Testis (tissue), 5 donors: ENCODE measurements at regions of chr13 and their contacts with region 1.

Region 1: DNA sequence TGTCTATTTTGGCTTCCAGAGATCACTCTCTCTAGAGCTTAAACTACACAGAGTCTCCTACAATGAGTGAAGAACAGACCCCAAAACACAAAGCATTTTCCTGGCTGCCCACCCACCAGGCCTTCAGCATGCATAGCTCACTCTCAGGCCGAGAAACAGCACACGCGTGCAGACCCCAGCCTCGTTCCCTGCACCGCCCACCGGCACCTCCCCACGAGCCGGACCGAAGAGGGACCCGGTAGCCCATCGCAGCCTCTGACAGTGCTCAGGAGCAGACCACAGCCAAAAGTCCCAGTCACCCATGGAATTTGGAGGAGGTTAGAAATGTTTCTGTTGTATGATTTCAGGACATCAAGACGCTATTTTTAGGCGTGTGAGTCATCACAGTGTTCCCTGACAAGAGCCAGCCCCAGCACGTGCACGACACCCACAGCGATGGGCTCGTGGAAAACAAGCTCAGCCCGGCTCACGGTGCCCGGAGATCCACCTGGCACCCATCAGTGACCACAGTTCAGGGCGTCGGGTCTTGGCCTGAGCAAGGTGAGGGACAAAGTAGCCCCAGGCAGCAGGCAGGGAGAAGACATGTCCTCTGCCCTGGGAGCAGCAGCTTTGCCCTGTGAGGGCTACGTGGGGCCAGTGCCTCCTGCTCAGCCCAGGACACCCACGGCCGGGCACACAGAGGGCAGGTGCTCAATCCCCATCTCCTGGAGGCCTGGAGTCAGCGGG is 50.1 kb upstream of the SPACA7 start:
- DNase-seq: no peak
- H3K4me3 ChIP-seq: no peak overlapping the region
- H3K27ac ChIP-seq: no peak overlapping the region
- H3K4me1 ChIP-seq: no peaks in the 10 kb centered on the region
- H3K27me3 ChIP-seq: no peaks in the 10 kb centered on the region
- CTCF ChIP-seq: no peak
- POLR2A ChIP-seq: no peak

Region 2: GRCh38 chr13:111539791-111540446 is 786.2 kb before region 1 on chr13:
- intact Hi-C with region 1: loop called (anchors 5 kb)
- DNase-seq: no peak
- H3K4me3 ChIP-seq: no peak overlapping the region
- H3K27ac ChIP-seq: no peak overlapping the region
- H3K4me1 ChIP-seq: no peaks in the 10 kb centered on the region
- H3K27me3 ChIP-seq: no peaks in the 10 kb centered on the region
- CTCF ChIP-seq: no peak
- POLR2A ChIP-seq: no peak

Region 3: GRCh38 chr13:112124141-112124540 is 201.9 kb before region 1 on chr13:
- intact Hi-C with region 1: no loop called
- DNase-seq: no peak
- H3K4me3 ChIP-seq: no peak overlapping the region
- H3K27ac ChIP-seq: no peak overlapping the region
- H3K4me1 ChIP-seq: no peaks in the 10 kb centered on the region
- H3K27me3 ChIP-seq: no peaks in the 10 kb centered on the region
- CTCF ChIP-seq: no peak
- POLR2A ChIP-seq: no peak

Region 4: GRCh38 chr13:112522578-112522977 is 196.5 kb after region 1 on chr13:
- intact Hi-C with region 1: no loop called
- DNase-seq: no peak
- H3K4me3 ChIP-seq: no peak overlapping the region
- H3K27ac ChIP-seq: no peak overlapping the region
- H3K4me1 ChIP-seq: no peaks in the 10 kb centered on the region
- H3K27me3 ChIP-seq: no peaks in the 10 kb centered on the region
- CTCF ChIP-seq: no peak
- POLR2A ChIP-seq: no peak

Region 5: DNA sequence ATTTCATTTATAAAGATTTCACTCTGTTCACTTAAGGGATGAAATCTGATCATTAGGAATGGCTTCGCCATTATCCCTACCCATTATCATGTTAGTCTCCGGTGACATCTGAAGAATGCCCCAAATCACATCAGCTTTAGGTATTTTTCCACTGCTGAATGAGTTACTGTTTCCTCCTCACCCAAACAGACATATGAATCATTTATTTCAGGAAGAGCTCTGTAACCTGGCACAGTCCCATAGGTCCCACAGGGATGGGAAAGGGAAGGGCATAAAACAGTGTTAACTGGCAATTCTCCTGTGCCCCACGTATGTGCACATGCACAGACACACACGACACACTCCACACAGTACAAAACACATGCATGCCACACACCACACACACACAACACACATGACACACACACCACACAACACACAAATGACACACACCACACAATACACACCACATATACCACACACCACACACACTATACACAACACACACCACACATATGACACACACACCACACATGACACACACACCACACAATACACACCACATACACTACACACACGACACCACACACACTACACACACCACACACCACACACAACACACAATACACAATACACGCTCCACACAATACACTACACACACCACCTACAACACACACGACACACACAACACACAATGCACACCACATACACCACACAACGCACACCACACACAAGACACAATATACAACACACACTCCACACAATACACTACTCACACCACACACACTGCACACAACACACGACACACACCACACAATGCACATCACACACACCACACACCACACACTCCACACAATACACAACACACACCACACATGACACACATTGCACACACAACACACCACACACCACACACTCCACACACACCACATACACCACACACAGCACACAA is 1448.4 kb after region 1 on chr13:
- intact Hi-C with region 1: no loop called
- DNase-seq: no peak
- H3K4me3 ChIP-seq: no peak overlapping the region
- H3K27ac ChIP-seq: no peak overlapping the region
- H3K4me1 ChIP-seq: no peaks in the 10 kb centered on the region
- H3K27me3 ChIP-seq: no peaks in the 10 kb centered on the region
- CTCF ChIP-seq: no peak
- POLR2A ChIP-seq: no peak